K562 (cell line): ENCODE measurements at regions of chr6 and their contacts with region 1.

Region 1: GRCh38 chr6:139996253-139996834 is 621.9 kb upstream of the CITED2 start:
- DNase-seq: peak in 2 of 4 experiments; percentile 47 to 62
- ATAC-seq: peak; percentile 98
- H3K4me3 ChIP-seq: no peak overlapping the region
- H3K27ac ChIP-seq: no peak overlapping the region
- H3K4me1 ChIP-seq: no peaks in the 10 kb centered on the region
- H3K27me3 ChIP-seq: no peaks in the 10 kb centered on the region
- CTCF ChIP-seq: peak; percentile 44 to 71 (median 68); a peak in 5 of 6 replicates
- EP300 ChIP-seq: no peak
- POLR2A ChIP-seq: no peak
- RAD21 ChIP-seq: peak; percentile 86 to 93

Region 2: GRCh38 chr6:139369568-139370282 is 626.6 kb before region 1 on chr6:
- CTCF ChIA-PET with region 1: interaction called, 11 read pairs
- POLR2A ChIA-PET with region 1: no interaction called
- in situ Hi-C with region 1: loop called (anchors 10 kb)
- intact Hi-C with region 1: loop called (anchors 1 kb)
- DNase-seq: peak in 2 of 4 experiments; percentile 59 to 64
- ATAC-seq: no peak
- H3K4me3 ChIP-seq: no peak overlapping the region
- H3K27ac ChIP-seq: peak overlapping the region; percentile 5; the same call in 2 of the 3 replicates
- H3K4me1 ChIP-seq: peaks cover 18 to 24% of the 10 kb centered on the region in 2 experiments
- H3K27me3 ChIP-seq: no peaks in the 10 kb centered on the region
- CTCF ChIP-seq: peak; percentile 66 to 87 (median 76)
- EP300 ChIP-seq: no peak
- POLR2A ChIP-seq: no peak
- RAD21 ChIP-seq: peak; percentile 94 to 97

Region 3: GRCh38 chr6:139881728-139882211 is 114.6 kb before region 1 on chr6:
- CTCF ChIA-PET with region 1: no interaction called
- POLR2A ChIA-PET with region 1: no interaction called
- in situ Hi-C with region 1: no loop called
- intact Hi-C with region 1: loop called (anchors 5 kb)
- DNase-seq: peak; percentile 27 to 43 (median 34)
- ATAC-seq: peak; percentile 85
- H3K4me3 ChIP-seq: no peak overlapping the region
- H3K27ac ChIP-seq: no peak overlapping the region
- H3K4me1 ChIP-seq: peaks cover 0 to 18% of the 10 kb centered on the region in 2 experiments; a peak in 4 of 5 replicates
- H3K27me3 ChIP-seq: no peaks in the 10 kb centered on the region
- CTCF ChIP-seq: peak; percentile 44 to 52 (median 48); a peak in 4 of 6 replicates
- EP300 ChIP-seq: no peak
- POLR2A ChIP-seq: no peak
- RAD21 ChIP-seq: peak; percentile 39 to 61

Region 4: DNA sequence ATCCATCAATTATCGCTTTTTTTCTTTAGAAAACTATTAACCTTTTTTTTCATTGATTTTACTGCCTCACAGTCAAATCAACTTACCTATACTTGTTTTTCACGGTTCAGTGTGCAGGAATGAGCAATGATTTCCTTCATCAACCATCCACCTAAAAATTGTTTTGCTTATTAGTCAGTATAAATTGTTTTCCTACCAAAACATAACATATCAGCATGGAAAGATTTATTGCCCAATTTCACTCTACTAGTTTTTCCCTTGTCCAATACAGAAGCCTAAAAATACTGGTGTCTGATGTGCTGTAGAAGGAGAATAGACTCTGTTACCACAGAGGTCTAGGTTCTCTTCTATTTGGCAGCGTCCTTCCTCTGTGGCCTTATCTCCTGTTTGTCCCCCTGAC is 63.7 kb before region 1 on chr6:
- CTCF ChIA-PET with region 1: interaction called, 3 read pairs
- POLR2A ChIA-PET with region 1: no interaction called
- in situ Hi-C with region 1: no loop called
- intact Hi-C with region 1: loop called (anchors 5 kb)
- DNase-seq: no peak
- ATAC-seq: no peak; the same call in 2 of the 3 replicates
- H3K4me3 ChIP-seq: no peak overlapping the region
- H3K27ac ChIP-seq: no peak overlapping the region
- H3K4me1 ChIP-seq: peaks cover 0 to 11% of the 10 kb centered on the region in 2 experiments; a peak in 3 of 5 replicates
- H3K27me3 ChIP-seq: no peaks in the 10 kb centered on the region
- CTCF ChIP-seq: no peak
- EP300 ChIP-seq: no peak
- POLR2A ChIP-seq: no peak
- RAD21 ChIP-seq: no peak